Caco-2 (cell line): ENCODE measurements at regions of chr7 and their contacts with region 1.

Region 1: GRCh38 chr7:24665564-24666294 is 91.5 kb downstream of the GSDME start:
- DNase-seq: peak in 1 of 2 experiments; percentile 65
- H3K4me3 ChIP-seq: no peak overlapping the region
- H3K4me3 Mint-ChIP-seq: no peak overlapping the region
- H3K27ac Mint-ChIP-seq: no peak overlapping the region
- H3K4me1 ChIP-seq: peaks cover 10% of the 10 kb centered on the region
- H3K4me1 Mint-ChIP-seq: peaks cover 5% of the 10 kb centered on the region
- H3K27me3 ChIP-seq: no peaks in the 10 kb centered on the region
- H3K27me3 Mint-ChIP-seq: no peaks in the 10 kb centered on the region
- CTCF ChIP-seq: peak; percentile 67 to 88

Region 2: GRCh38 chr7:23863209-23863798 is 802.4 kb before region 1 on chr7:
- CTCF ChIA-PET with region 1: no interaction called
- POLR2A ChIA-PET with region 1: no interaction called
- intact Hi-C with region 1: loop called (anchors 5 kb)
- DNase-seq: peak in 1 of 2 experiments; percentile 44
- H3K4me3 ChIP-seq: no peak overlapping the region
- H3K4me3 Mint-ChIP-seq: no peak overlapping the region
- H3K27ac Mint-ChIP-seq: no peak overlapping the region
- H3K4me1 ChIP-seq: no peaks in the 10 kb centered on the region
- H3K4me1 Mint-ChIP-seq: no peaks in the 10 kb centered on the region
- H3K27me3 ChIP-seq: no peaks in the 10 kb centered on the region
- H3K27me3 Mint-ChIP-seq: peaks cover 7% of the 10 kb centered on the region
- CTCF ChIP-seq: peak; percentile 62 to 83

Region 3: DNA sequence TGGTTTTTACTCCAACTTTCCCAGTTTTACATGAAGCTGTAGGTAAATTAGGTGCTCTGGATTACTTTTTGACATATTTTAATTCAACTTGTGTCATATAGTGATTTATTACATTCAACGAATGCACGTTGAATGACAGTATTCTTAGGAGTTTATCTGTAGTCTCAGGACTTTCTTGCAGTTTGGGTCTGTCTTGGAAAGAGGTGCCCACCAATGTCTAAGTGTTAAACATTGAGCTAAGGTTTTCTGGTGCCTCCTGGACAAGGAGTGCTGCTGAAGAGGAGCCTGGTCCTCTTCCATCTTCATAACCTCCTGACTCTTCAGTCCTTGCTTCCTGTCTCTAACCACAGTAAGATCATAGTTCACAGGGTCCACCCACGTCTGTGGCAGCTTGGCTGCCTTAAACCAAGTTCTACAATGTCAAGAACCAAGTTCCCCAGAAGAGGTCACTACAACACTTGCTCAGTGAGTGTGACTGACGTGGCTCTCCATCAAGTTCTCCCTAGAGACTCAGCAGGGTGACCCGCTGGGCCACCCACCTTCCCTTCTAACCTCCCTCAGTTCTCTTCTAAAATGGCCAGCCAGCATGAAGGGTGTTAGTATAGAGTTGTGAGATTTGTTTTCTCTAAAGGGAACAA is 375.6 kb before region 1 on chr7:
- CTCF ChIA-PET with region 1: no interaction called
- POLR2A ChIA-PET with region 1: no interaction called
- intact Hi-C with region 1: loop called (anchors 1 kb)
- DNase-seq: peak; percentile 62 to 66
- H3K4me3 ChIP-seq: no peak overlapping the region
- H3K4me3 Mint-ChIP-seq: no peak overlapping the region
- H3K27ac Mint-ChIP-seq: no peak overlapping the region
- H3K4me1 ChIP-seq: no peaks in the 10 kb centered on the region
- H3K4me1 Mint-ChIP-seq: peaks cover 8% of the 10 kb centered on the region
- H3K27me3 ChIP-seq: no peaks in the 10 kb centered on the region; the same call in 1 of the 2 replicates
- H3K27me3 Mint-ChIP-seq: peaks cover 17% of the 10 kb centered on the region
- CTCF ChIP-seq: peak; percentile 60 to 68

Region 4: DNA sequence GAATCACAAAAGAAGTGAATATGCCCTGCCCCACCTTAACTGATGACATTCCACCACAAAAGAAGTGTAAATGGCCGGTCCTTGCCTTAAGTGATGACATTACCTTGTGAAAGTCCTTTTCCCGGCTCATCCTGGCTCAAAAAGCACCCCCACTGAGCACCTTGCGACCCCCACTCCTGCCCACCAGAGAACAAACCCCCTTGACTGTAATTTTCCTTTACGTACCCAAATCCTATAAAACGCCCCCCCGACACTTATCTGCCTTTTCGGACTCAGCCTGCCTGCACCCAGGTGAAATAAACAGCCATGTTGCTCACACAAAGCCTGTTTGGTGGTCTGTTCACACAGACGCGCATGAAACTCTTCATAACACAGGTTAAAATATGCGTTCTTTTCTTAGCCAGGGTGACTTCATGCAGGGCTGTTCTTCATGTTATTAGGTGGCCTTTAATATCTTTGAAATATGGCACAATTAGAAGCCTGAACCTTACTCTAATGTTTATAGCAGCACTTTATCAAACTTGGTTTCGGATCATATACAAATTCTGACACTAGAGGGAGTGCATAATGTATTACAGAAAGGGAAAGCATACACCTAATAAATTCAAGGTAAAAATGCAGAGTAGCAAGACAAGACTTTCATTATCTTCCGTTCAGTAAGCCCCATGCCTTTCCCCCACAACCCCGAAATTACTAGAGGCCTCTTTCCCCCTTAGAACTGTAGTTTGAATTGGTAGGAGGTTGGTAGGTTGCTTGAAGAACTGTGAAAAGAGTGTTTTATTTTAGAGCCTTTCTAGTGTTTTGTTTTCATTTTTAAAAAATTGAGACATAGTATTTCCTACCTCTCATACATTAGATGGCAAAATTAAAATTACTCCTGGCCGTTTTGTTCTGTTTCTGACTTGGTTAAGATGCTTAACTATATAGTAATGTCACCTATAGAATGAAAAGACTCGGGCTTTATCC is 263.8 kb before region 1 on chr7:
- CTCF ChIA-PET with region 1: no interaction called
- POLR2A ChIA-PET with region 1: no interaction called
- intact Hi-C with region 1: loop called (anchors 2 kb)
- DNase-seq: peak in 1 of 2 experiments; percentile 20
- H3K4me3 ChIP-seq: no peak overlapping the region
- H3K4me3 Mint-ChIP-seq: no peak overlapping the region
- H3K27ac Mint-ChIP-seq: no peak overlapping the region
- H3K4me1 ChIP-seq: peaks cover 11% of the 10 kb centered on the region; the same call in 1 of the 2 replicates
- H3K4me1 Mint-ChIP-seq: peaks cover 6% of the 10 kb centered on the region
- H3K27me3 ChIP-seq: no peaks in the 10 kb centered on the region
- H3K27me3 Mint-ChIP-seq: no peaks in the 10 kb centered on the region
- CTCF ChIP-seq: peak; percentile 32 to 37

Region 5: DNA sequence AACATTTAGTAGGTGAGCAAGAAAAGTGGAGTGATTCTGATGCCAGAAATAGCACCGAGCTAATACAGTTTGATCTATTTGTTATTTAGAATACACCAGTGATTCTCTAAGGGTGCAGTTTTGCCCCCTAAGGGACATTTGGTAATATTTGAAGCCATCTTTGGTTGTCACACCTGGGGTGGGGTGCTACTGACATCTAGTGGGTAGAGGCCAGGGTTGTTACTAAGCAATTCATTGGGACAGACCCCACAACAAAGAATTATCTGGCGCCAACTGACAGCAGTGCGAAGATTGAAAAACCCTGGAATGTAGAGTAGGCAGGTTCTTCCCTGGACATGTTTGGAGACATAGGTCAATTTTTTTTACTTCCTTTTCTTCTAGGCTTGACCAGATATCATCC is 77.9 kb before region 1 on chr7:
- CTCF ChIA-PET with region 1: interaction called, 3 read pairs
- POLR2A ChIA-PET with region 1: no interaction called
- intact Hi-C with region 1: loop called (anchors 5 kb)
- DNase-seq: peak; percentile 59 to 72
- H3K4me3 ChIP-seq: no peak overlapping the region
- H3K4me3 Mint-ChIP-seq: no peak overlapping the region
- H3K27ac Mint-ChIP-seq: no peak overlapping the region
- H3K4me1 ChIP-seq: peaks cover 8% of the 10 kb centered on the region
- H3K4me1 Mint-ChIP-seq: peaks cover 7% of the 10 kb centered on the region
- H3K27me3 ChIP-seq: no peaks in the 10 kb centered on the region
- H3K27me3 Mint-ChIP-seq: no peaks in the 10 kb centered on the region
- CTCF ChIP-seq: peak; percentile 77 to 80

Region 6: GRCh38 chr7:24609059-24609458 is 56.7 kb before region 1 on chr7:
- CTCF ChIA-PET with region 1: no interaction called
- POLR2A ChIA-PET with region 1: no interaction called
- intact Hi-C with region 1: no loop called
- DNase-seq: no peak
- H3K4me3 ChIP-seq: no peak overlapping the region
- H3K4me3 Mint-ChIP-seq: no peak overlapping the region
- H3K27ac Mint-ChIP-seq: no peak overlapping the region
- H3K4me1 ChIP-seq: no peaks in the 10 kb centered on the region
- H3K4me1 Mint-ChIP-seq: no peaks in the 10 kb centered on the region
- H3K27me3 ChIP-seq: no peaks in the 10 kb centered on the region
- H3K27me3 Mint-ChIP-seq: no peaks in the 10 kb centered on the region
- CTCF ChIP-seq: no peak

Region 7: DNA sequence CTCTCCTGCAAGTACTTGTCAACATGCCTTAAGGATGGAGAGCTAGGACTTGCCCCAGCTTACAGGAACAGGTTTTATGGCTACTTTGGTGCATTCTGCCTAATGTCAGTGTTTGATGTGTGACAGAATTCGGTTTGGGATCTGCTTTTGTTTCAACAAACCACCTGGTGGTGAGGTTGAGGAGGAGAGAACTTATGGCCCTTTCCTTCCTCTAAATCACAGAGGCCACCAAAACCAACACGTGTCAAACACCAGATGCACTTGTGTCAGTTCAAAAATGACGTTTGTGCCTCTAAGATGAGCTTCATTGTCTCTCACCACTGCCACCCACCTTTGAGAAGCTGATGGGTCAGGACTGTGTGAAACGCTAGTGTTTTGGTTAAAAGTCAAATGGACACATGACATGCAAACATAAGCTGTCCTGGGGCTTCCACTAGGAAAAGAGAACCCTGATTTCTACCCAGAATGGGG is 230.3 kb after region 1 on chr7:
- CTCF ChIA-PET with region 1: no interaction called
- POLR2A ChIA-PET with region 1: no interaction called
- intact Hi-C with region 1: no loop called
- DNase-seq: no peak
- H3K4me3 ChIP-seq: no peak overlapping the region
- H3K4me3 Mint-ChIP-seq: no peak overlapping the region
- H3K27ac Mint-ChIP-seq: no peak overlapping the region
- H3K4me1 ChIP-seq: peaks cover under 1% of the 10 kb centered on the region; the same call in 1 of the 2 replicates
- H3K4me1 Mint-ChIP-seq: no peaks in the 10 kb centered on the region
- H3K27me3 ChIP-seq: no peaks in the 10 kb centered on the region
- H3K27me3 Mint-ChIP-seq: no peaks in the 10 kb centered on the region
- CTCF ChIP-seq: no peak